Aorta (tissue), 5 donors: ENCODE measurements at regions of chr16 and their contacts with region 1.

Region 1: GRCh38 chr16:85420501-85421337 is 192.4 kb upstream of the GSE1 start:
- DNase-seq: peak; percentile 66 to 89
- ATAC-seq: peak; percentile 75
- H3K4me3 ChIP-seq: no peak overlapping the region
- H3K27ac ChIP-seq: no peak overlapping the region
- H3K4me1 ChIP-seq: no peaks in the 10 kb centered on the region
- H3K27me3 ChIP-seq: no peaks in the 10 kb centered on the region

Region 2: GRCh38 chr16:85114909-85115567 is 305.7 kb before region 1 on chr16:
- intact Hi-C with region 1: loop called in 1 of 2 experiments (anchors 10 kb)
- DNase-seq: peak; percentile 93 to 97
- ATAC-seq: peak; percentile 92
- H3K4me3 ChIP-seq: no peak overlapping the region
- H3K27ac ChIP-seq: no peak overlapping the region
- H3K4me1 ChIP-seq: no peaks in the 10 kb centered on the region
- H3K27me3 ChIP-seq: no peaks in the 10 kb centered on the region

Region 3: DNA sequence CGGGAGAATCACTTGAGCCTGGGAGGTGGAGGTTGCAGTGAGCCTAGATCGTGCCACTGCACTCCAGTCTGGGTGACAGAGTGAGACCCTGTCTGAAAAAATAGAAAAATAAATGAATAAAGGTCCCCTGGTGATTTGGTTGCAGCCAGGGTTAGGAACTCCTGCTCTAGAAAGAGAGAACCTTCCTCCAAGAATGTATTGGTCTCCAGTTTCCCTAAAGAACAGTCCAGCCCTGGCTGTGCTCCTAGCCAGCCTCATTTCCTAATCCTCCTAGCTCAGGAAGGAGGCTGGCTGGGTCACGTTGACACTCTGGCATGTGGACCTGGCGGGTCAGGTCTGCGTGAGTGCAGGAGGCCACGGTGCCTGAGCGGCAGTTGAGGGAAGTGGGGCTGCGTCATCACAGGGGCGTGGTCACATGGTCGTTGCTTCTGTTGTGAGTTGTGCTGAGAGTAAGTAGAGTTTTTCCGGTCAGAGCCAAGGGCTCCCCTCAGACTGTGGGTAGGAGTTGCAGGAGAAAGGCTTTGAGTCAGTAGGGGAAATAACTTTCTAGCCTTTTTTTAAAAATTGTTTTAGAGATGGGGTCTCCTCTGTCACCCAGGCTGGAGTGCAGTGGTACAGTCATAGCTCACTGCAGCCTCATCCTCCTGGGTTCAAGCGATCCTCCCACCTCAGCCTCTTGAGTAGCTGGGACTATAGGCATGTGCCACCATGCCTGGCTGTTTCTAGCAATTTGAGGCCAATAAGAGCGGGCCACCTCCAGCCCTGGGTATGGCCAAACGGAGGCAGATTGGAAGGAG is 114.5 kb before region 1 on chr16:
- intact Hi-C with region 1: loop called in 1 of 2 experiments (anchors 10 kb)
- DNase-seq: peak; percentile 96 to 97
- ATAC-seq: peak; percentile 84
- H3K4me3 ChIP-seq: no peak overlapping the region
- H3K27ac ChIP-seq: no peak overlapping the region
- H3K4me1 ChIP-seq: no peaks in the 10 kb centered on the region
- H3K27me3 ChIP-seq: no peaks in the 10 kb centered on the region

Region 4: GRCh38 chr16:85479972-85480751 is 59.4 kb after region 1 on chr16:
- intact Hi-C with region 1: no loop called
- DNase-seq: no peak
- ATAC-seq: no peak
- H3K4me3 ChIP-seq: no peak overlapping the region
- H3K27ac ChIP-seq: no peak overlapping the region
- H3K4me1 ChIP-seq: no peaks in the 10 kb centered on the region
- H3K27me3 ChIP-seq: no peaks in the 10 kb centered on the region

Region 5: DNA sequence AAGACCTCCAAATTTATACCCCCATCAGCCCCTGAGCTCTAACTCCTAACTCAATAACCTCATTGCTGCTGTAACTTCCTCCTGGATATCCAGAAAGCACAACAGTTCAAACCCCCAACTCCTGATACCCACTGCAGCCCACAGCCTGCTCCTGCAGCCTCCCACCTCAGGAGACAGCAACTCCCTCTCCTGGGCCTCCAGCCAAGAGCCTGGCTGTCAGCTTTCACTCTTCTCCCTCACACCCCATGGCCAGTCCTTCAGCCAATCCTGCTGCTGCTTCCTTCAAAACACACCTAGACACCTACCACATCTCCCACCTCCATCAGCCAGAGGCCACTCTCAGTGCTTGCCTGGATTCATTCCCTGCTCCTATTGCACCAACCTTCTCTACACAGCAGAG is 262.6 kb after region 1 on chr16:
- intact Hi-C with region 1: no loop called
- DNase-seq: no peak
- ATAC-seq: no peak
- H3K4me3 ChIP-seq: no peak overlapping the region
- H3K27ac ChIP-seq: no peak overlapping the region
- H3K4me1 ChIP-seq: no peaks in the 10 kb centered on the region
- H3K27me3 ChIP-seq: no peaks in the 10 kb centered on the region

Region 6: DNA sequence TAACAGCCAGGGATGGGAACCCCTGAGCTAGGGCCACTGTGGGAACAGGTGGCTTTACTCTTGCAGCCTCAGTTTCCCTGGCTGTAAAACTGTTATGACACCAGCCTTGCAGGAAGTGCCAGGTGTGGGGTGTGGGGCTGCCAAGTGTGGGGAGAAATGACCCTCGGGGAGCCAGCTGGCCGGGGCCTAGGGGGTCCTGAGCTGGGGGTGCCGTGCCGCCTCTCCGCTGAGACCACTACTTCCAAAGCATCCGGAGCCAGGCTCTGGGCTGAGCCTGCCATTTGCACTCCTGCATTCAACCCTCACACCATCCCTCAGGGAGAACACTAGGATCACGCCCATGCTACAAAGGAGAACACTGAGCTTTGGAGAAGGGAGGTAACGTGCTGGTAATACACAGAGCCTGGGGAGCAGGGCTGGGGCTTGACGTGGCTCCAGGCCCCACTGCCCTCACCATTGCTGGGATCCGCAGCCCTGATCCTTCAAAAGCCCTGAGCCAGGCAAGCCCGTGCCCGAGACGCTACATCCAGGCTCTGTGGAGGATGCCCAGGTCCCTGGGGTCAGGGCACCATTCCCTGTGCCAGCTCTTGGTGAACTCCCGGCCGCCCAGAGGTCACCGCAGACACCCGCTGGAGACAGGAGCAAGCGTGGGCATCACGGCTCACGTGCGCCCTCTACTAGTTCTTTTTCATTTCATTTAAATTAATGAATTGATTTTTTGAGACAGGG is 296.8 kb after region 1 on chr16:
- intact Hi-C with region 1: loop called in 1 of 2 experiments (anchors 10 kb)
- DNase-seq: peak; percentile 63 to 84
- ATAC-seq: peak; percentile 42
- H3K4me3 ChIP-seq: no peak overlapping the region
- H3K27ac ChIP-seq: no peak overlapping the region
- H3K4me1 ChIP-seq: no peaks in the 10 kb centered on the region
- H3K27me3 ChIP-seq: no peaks in the 10 kb centered on the region